Endothelial cell of umbilical vein (primary cell): ENCODE measurements at regions of chr12 and their contacts with region 1.

Region 1: DNA sequence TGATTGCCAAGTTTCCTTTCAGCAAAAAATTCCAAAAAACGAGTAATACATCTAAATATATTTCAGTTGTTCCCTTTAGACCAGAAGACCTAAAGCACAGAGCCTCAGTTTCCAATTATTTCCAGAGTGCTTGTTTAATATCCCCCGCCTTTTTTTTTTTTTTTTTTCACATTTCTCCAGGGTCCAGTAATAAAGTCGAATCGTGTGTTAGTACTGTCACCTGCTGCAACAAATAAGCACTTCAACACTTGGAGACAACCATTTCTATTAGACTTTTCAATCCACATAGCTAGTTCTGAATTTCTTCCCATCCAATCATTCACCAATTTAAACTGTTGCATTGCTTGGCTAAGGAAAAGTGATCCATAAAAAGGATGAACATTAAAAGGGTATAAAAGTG is 13.6 kb downstream of the PDE6H start:
- DNase-seq: peak; percentile 40
- H3K4me3 ChIP-seq: no peak overlapping the region
- H3K27ac ChIP-seq: no peak overlapping the region
- H3K4me1 ChIP-seq: no peaks in the 10 kb centered on the region
- H3K27me3 ChIP-seq: no peaks in the 10 kb centered on the region
- CTCF ChIP-seq: peak in 1 of 2 donors; percentile 24
- POLR2A ChIP-seq: no peak

Region 2: DNA sequence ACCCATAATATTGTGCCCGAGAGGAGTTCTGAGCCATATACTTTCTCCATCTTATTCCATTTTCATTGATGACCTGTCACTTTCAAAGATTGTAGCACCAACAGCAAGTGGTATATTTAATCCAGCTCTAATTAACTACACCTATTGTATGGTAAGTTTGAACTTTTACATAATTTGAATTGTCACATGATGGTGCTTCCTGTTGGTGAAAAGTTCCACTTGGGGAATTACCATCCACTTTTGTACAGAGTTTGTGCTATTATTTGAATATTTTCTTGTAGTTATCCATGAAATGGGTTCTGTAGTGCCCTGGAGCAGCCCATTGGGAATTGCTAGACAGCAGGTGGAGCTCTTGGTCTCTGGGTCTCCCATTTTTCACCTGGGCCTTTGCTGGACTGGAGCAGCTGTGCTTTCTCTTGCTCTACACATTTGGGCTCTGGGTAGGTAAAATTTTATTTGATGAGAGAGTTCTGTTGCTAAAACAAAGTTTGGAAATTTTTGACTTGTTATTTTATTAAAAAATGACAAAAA is 175.4 kb before region 1 on chr12:
- CTCF ChIA-PET with region 1: interaction called, 30 read pairs
- POLR2A ChIA-PET with region 1: no interaction called
- dilution Hi-C with region 1: no loop called
- intact Hi-C with region 1: no loop called
- DNase-seq: peak; percentile 54
- H3K4me3 ChIP-seq: no peak overlapping the region
- H3K27ac ChIP-seq: no peak overlapping the region
- H3K4me1 ChIP-seq: no peaks in the 10 kb centered on the region
- H3K27me3 ChIP-seq: no peaks in the 10 kb centered on the region
- CTCF ChIP-seq: peak; percentile 57 to 61
- POLR2A ChIP-seq: no peak

Region 3: DNA sequence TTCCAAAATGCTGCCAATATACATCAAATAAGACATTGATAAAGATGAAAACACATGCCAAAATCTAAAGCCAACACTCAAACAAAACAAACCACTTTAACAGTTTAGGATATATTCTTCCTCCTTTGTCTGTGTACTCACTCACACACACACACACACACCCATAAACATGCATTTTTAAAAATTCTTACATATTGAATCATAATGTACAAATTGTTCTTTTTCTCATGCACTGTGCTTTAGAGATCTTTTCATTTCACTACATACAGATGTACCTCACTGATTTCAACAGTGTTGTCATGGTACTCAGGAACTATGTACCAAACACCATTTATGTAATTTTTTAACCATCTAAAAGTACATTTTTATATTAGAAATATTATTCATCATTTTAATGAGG is 244.3 kb after region 1 on chr12:
- CTCF ChIA-PET with region 1: no interaction called
- POLR2A ChIA-PET with region 1: no interaction called
- dilution Hi-C with region 1: no loop called
- intact Hi-C with region 1: no loop called
- DNase-seq: no peak
- H3K4me3 ChIP-seq: no peak overlapping the region
- H3K27ac ChIP-seq: no peak overlapping the region
- H3K4me1 ChIP-seq: no peaks in the 10 kb centered on the region
- H3K27me3 ChIP-seq: peaks cover 9 to 14% of the 10 kb centered on the region in 2 experiments
- CTCF ChIP-seq: no peak
- POLR2A ChIP-seq: no peak

Region 4: DNA sequence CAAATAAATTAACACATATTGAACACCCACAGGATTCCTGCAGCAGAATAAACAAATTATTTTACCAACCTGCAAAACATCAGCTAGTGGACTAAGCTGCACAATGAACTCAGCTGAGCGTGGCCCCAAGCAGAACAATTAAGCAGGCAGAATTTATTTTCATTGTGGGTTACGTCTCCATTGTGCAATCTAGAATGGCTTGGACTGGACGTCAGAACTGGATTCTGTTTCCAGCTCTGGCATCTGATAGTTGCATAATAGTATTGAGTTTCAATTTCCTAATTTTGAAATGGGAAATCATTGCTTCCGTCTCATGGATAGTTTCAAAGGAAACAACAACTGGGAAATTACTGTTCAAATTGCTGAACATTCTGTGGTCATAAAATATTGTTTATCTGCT is 270.3 kb after region 1 on chr12:
- CTCF ChIA-PET with region 1: no interaction called
- POLR2A ChIA-PET with region 1: no interaction called
- dilution Hi-C with region 1: no loop called
- intact Hi-C with region 1: no loop called
- DNase-seq: no peak
- H3K4me3 ChIP-seq: no peak overlapping the region
- H3K27ac ChIP-seq: no peak overlapping the region
- H3K4me1 ChIP-seq: no peaks in the 10 kb centered on the region
- H3K27me3 ChIP-seq: peaks cover 8 to 14% of the 10 kb centered on the region in 2 experiments
- CTCF ChIP-seq: no peak
- POLR2A ChIP-seq: no peak

Region 5: DNA sequence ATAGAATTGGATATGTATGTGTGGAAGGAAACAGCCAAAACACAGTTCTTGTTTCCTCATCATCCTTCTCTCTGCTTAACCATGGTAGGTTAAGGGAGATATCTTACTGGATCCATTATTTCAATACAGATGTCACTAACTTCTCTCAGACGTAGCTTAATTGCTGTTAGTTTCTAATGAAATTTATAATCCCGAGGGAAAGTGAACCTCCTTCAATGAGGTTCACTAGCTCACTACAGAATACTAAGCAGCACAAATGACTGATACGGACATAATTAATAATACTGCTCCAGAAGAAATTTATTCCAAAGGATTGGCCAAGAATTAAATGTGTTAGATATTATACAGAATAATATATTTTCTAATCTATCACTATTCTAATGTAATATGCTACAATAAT is 307.3 kb after region 1 on chr12:
- CTCF ChIA-PET with region 1: no interaction called
- POLR2A ChIA-PET with region 1: no interaction called
- dilution Hi-C with region 1: no loop called
- intact Hi-C with region 1: no loop called
- DNase-seq: no peak
- H3K4me3 ChIP-seq: no peak overlapping the region
- H3K27ac ChIP-seq: no peak overlapping the region
- H3K4me1 ChIP-seq: no peaks in the 10 kb centered on the region
- H3K27me3 ChIP-seq: no peaks in the 10 kb centered on the region
- CTCF ChIP-seq: no peak
- POLR2A ChIP-seq: no peak